Transverse colon (tissue), 4 donors: ENCODE measurements at regions of chr10 and their contacts with region 1.

Region 1: DNA sequence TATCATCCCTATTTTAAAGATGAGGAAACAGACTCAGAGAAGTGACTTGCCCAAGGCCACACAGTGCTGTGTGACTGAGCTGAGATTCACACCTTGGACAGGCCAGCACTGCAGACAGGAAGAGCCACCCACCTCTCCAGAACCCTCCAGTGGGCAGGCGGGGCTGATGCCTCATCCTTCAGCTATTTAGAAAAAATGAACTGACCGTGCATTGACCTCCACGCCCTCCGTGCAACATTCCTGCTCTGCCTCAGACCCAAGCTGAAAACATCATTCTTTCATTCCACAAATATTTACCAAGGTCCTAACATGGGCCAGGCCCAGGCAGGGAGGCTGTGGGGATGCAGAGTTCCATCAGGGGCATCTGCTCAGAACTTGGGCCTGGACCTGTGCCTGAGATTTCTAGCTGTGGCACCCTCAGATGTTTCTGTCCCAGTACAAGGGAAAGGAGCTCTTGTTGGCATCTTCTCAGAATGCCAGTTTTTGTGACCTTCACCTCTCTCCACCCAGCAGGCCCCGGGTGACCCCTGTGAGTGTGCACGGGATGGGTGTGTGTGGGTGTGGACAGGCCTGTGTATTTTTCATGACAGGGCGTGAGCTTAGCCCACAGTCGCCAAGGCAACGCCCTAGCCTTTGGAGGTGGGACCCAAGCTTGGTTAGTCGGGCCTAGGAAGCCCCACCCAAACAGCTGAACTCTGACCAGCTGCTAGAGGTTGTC is 6.5 kb downstream of the VSIR start:
- DNase-seq: peak; percentile 93
- H3K4me3 ChIP-seq: no peak overlapping the region
- H3K27ac ChIP-seq: peak overlapping the region; percentile 91 to 98 (median 94)
- H3K4me1 ChIP-seq: peaks cover 70 to 98% (median 83%) of the 10 kb centered on the region in 4 donors
- H3K27me3 ChIP-seq: no peaks in the 10 kb centered on the region
- CTCF ChIP-seq: peak in 1 of 5 experiments; percentile 13
- EP300 ChIP-seq: peak; percentile 88
- POLR2A ChIP-seq: no peak

Region 2: GRCh38 chr10:71713135-71714030 is 53.5 kb before region 1 on chr10:
- in situ Hi-C with region 1: loop called in 1 of 4 experiments (anchors 10 kb)
- intact Hi-C with region 1: loop called (anchors 5 kb)
- DNase-seq: peak; percentile 69
- H3K4me3 ChIP-seq: no peak overlapping the region
- H3K27ac ChIP-seq: peak overlapping the region; percentile 80 to 93 (median 86)
- H3K4me1 ChIP-seq: peaks cover 28 to 39% (median 29%) of the 10 kb centered on the region in 4 donors
- H3K27me3 ChIP-seq: no peaks in the 10 kb centered on the region
- CTCF ChIP-seq: peak in 2 of 5 experiments; percentile 23 to 28
- EP300 ChIP-seq: no peak
- POLR2A ChIP-seq: no peak